ENCODE measurements at regions of chr11 and their contacts with region 1.

Region 1: DNA sequence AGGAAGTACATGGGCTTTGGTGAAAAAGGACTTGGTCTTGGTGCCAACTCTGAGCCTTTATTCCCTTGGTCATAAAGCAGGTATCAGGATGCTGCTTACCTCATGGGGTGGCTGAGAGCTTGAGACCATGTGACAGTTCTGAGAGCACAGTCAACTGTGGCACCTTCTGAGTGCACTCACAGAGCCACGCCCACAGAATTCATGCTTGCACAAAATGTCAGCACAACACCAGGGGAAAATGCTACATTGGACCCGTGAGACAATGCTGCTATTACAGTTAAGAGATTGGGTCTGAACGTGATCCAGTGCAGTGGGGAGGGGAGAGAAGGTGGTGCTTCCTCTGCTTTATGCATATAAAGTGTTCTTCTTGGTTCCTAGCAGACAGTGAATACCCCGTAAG is 79.5 kb upstream of the SPON1 start:
- DNase-seq: no peak
- ATAC-seq: no peak
- H3K4me3 ChIP-seq: no peak overlapping the region
- H3K27ac ChIP-seq: no peak overlapping the region
- H3K4me1 ChIP-seq: no peaks in the 10 kb centered on the region
- CTCF ChIP-seq: no peak
- EP300 ChIP-seq: no peak
- POLR2A ChIP-seq: no peak
- RAD21 ChIP-seq: no peak

Region 2: GRCh38 chr11:13857828-13858227 is 25.2 kb before region 1 on chr11:
- CTCF ChIA-PET with region 1: no interaction called
- POLR2A ChIA-PET with region 1: no interaction called
- DNase-seq: no peak
- ATAC-seq: no peak
- H3K4me3 ChIP-seq: no peak overlapping the region
- H3K27ac ChIP-seq: no peak overlapping the region
- H3K4me1 ChIP-seq: no peaks in the 10 kb centered on the region
- CTCF ChIP-seq: no peak
- EP300 ChIP-seq: no peak
- POLR2A ChIP-seq: no peak
- RAD21 ChIP-seq: no peak

Region 3: GRCh38 chr11:13868710-13869397 is 14.2 kb before region 1 on chr11:
- CTCF ChIA-PET with region 1: interaction called, 10 read pairs
- POLR2A ChIA-PET with region 1: no interaction called
- DNase-seq: no peak
- ATAC-seq: no peak
- H3K4me3 ChIP-seq: no peak overlapping the region
- H3K27ac ChIP-seq: no peak overlapping the region
- H3K4me1 ChIP-seq: 0 out of 3 replicates have a peak, but pooled peaks cover 5% of the 10 kb centered on the region
- CTCF ChIP-seq: no peak
- EP300 ChIP-seq: 0 out of 5 replicates have a peak, but pooled peaks of 1 of the 2 experiments have one; percentile 18
- POLR2A ChIP-seq: no peak
- RAD21 ChIP-seq: no peak